ENCODE measurements at regions of chr5 and their contacts with region 1.

Region 1: DNA sequence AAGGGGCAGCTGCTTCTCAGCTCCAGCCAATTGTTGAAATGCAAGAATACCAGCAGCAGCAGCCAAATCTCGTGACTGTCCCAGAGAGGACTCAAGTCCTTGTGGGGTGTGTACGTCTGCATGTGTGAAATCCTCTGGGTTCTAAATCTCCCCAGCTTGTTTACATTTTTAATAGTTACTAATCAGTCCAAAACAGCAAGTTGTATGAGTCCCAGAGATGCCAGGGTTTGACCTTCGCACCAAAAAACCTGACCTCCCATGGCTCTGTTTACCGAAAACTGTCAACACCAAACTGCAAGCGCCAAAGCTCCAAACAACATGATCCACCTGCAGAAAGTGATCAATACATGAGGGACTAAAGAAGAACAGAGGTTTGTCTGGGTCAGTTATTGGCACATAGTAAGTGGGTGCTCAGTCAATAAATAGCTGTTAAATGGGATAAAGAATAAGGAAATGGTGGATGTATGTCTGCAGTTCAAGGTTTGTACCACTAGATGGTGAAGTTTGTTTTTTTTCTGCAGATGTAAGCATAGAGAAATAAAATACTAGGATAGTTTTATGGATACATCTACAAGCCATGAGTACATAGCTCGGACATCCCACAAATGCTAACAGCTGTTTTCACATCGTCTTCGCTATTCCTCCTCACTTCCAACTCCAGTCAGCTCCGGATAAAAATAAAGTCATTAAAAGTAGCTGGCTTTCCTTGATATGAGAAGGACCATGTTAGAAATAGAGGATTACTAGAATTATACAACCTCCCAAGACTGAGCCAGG is 85.3 kb upstream of the ADRB2 start:
- DNase-seq: peak; percentile 36 to 55
- ATAC-seq: peak; percentile 62 to 80; a peak in 5 of 6 replicates
- H3K4me3 ChIP-seq: no peak overlapping the region
- H3K27ac ChIP-seq: no peak overlapping the region
- H3K4me1 ChIP-seq: no peaks in the 10 kb centered on the region
- CTCF ChIP-seq: peak; percentile 73
- EP300 ChIP-seq: no peak
- POLR2A ChIP-seq: no peak
- RAD21 ChIP-seq: peak; percentile 70 to 76

Region 2: DNA sequence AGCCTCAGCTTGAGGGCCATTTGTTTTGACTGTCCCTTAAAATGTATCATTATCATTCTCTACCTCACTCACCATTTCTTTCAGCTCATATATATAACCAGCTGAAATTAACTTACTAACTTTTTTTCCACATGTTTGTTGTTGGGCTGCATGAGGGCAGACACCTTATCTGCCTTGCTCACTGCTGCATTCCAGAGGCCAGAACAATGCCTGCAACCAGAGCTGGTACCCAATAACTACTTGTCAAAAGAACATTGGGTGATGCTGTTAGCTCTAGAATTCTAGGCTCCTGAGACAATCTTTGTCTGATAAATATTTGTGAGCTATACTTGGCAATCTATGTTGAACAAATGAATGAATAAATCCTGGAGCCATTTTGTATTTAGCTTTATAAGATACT is 155.2 kb before region 1 on chr5:
- CTCF ChIA-PET with region 1: no interaction called
- POLR2A ChIA-PET with region 1: no interaction called
- DNase-seq: no peak
- ATAC-seq: no peak
- H3K4me3 ChIP-seq: no peak overlapping the region
- H3K27ac ChIP-seq: no peak overlapping the region
- H3K4me1 ChIP-seq: no peaks in the 10 kb centered on the region
- CTCF ChIP-seq: no peak
- EP300 ChIP-seq: no peak
- POLR2A ChIP-seq: no peak
- RAD21 ChIP-seq: no peak

Region 3: GRCh38 chr5:148791334-148791667 is 50.1 kb after region 1 on chr5:
- CTCF ChIA-PET with region 1: interaction called, 12 read pairs
- POLR2A ChIA-PET with region 1: no interaction called
- DNase-seq: no peak
- ATAC-seq: no peak
- H3K4me3 ChIP-seq: no peak overlapping the region
- H3K27ac ChIP-seq: no peak overlapping the region
- H3K4me1 ChIP-seq: no peaks in the 10 kb centered on the region
- CTCF ChIP-seq: no peak
- EP300 ChIP-seq: no peak
- POLR2A ChIP-seq: no peak
- RAD21 ChIP-seq: no peak

Region 4: DNA sequence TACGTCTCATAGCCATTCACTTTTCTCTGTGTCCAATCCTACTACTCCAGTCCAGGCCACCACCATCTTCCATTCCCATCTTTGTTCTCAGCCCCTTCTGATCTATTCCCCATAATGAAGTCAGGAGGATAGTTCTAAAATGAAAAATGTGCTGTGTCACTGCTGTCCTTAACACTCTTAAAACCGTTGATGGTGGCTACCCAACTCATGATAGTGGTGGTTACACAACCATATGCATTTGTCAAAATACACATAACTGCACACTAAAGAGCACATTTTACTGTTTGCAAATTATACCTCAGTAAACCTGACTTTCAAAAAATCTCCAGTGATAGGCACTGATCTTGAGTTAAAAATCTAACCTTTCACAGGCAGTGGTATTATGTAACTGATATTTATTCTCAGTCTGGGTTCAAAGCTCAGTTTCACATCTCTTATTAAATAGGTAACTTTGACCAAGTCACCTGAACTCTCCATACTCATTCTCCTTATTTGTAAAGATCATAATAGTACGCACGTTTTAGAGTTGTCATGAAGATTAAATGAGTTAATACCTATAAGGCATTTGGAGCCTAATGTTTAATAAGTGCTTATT is 60.6 kb after region 1 on chr5:
- CTCF ChIA-PET with region 1: no interaction called
- POLR2A ChIA-PET with region 1: no interaction called
- DNase-seq: no peak
- ATAC-seq: no peak
- H3K4me3 ChIP-seq: no peak overlapping the region
- H3K27ac ChIP-seq: no peak overlapping the region
- H3K4me1 ChIP-seq: no peaks in the 10 kb centered on the region
- CTCF ChIP-seq: no peak
- EP300 ChIP-seq: no peak
- POLR2A ChIP-seq: no peak
- RAD21 ChIP-seq: no peak

Region 5: GRCh38 chr5:148912714-148913398 is 171.7 kb after region 1 on chr5:
- CTCF ChIA-PET with region 1: interaction called, 20 read pairs
- POLR2A ChIA-PET with region 1: no interaction called
- DNase-seq: peak; percentile 82
- ATAC-seq: peak; percentile 91 to 96
- H3K4me3 ChIP-seq: no peak overlapping the region
- H3K27ac ChIP-seq: peak overlapping the region; percentile 43 to 59; a peak in 5 of 6 replicates
- H3K4me1 ChIP-seq: peaks cover 37% of the 10 kb centered on the region
- CTCF ChIP-seq: peak; percentile 52
- EP300 ChIP-seq: peak in 1 of 2 experiments; percentile 29; a peak in 1 of 5 replicates
- POLR2A ChIP-seq: no peak
- RAD21 ChIP-seq: peak; percentile 65 to 66

Region 6: DNA sequence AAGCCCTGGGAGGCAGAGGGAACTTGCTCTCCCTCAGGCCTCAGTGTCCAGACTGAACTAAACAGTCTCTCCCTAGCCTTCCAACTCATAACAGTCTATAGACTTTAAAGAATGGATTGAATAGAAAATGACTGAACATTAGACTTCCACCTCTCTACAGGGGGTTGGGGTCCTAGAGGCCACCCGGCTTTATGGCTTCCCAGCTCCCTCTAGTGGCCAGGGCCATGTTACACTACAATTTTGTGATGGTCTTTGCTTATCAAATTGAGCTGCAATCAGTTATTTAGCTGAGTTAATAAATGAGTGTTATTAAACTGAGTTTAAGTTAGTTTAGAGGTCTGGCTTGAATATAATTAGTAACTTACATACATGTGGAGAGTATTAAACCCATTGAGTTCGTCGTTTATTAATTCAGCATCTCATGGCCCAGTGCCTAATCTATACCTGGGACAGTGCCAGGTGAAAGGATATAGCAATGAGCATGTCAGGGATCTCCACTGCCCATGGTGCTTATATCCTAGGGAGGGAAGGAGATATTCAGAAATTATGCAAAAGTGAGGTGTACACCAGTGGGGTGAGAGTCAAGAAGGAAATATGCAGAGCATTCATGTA is 216.5 kb after region 1 on chr5:
- CTCF ChIA-PET with region 1: interaction called, 23 read pairs
- POLR2A ChIA-PET with region 1: no interaction called
- DNase-seq: peak in 1 of 2 experiments; percentile 30
- ATAC-seq: peak in 1 of 2 experiments; percentile 86; a peak in 3 of 6 replicates
- H3K4me3 ChIP-seq: no peak overlapping the region
- H3K27ac ChIP-seq: no peak overlapping the region
- H3K4me1 ChIP-seq: no peaks in the 10 kb centered on the region
- CTCF ChIP-seq: peak; percentile 71
- EP300 ChIP-seq: no peak
- POLR2A ChIP-seq: no peak
- RAD21 ChIP-seq: peak; percentile 61 to 73

Region 7: GRCh38 chr5:149114403-149115312 is 373.5 kb after region 1 on chr5:
- CTCF ChIA-PET with region 1: interaction called, 179 read pairs
- POLR2A ChIA-PET with region 1: no interaction called
- DNase-seq: peak; percentile 33 to 75
- ATAC-seq: peak; percentile 99 to 100
- H3K4me3 ChIP-seq: no peak overlapping the region
- H3K27ac ChIP-seq: 0 out of 6 replicates have a peak overlapping the region, but pooled peaks have one; percentile 11 to 35
- H3K4me1 ChIP-seq: peaks cover 9% of the 10 kb centered on the region; the same call in 2 of the 3 replicates
- CTCF ChIP-seq: peak; percentile 78
- EP300 ChIP-seq: no peak
- POLR2A ChIP-seq: no peak
- RAD21 ChIP-seq: peak; percentile 86 to 90

Region 8: DNA sequence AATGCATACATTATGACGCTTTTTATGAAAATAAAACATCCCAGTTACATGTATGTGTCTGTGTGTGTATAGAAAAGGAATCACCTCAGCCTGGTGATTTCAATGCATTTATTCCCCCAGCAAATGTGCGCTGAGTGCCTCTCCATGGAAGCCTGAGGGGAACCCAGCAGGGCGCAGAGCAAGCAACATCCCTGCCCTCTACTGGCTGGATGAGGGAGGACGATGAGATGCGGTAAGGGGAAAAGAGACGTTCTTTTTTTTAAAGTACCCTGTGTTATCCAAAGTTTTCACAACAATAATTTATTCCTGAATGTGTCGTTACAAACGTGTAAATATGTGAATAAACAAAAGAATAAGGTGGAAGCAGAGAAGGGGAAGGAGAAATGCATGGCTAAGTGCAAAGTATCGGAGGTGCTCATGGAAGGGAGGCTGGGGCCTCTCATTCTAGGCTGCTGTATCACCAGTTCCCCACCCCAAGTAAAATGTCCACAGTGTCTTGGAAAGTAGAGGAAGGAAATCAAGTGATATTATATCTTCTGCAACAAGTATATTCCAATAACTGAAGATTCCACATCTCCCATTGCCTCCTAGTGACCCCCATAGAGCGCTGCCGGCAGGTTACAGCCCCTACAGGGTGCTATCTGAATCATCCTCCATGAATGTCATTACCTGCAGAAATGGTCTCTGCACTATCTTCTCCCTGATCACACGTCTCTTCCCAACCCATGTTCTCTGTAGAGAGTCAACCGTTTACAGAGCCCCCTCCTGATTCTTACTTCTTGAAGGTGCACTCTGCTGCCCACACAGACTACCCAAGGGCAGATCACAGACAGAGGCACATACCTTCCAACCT is 387.1 kb after region 1 on chr5:
- CTCF ChIA-PET with region 1: interaction called, 13 read pairs
- POLR2A ChIA-PET with region 1: no interaction called
- DNase-seq: peak; percentile 30 to 76
- ATAC-seq: peak; percentile 88 to 97
- H3K4me3 ChIP-seq: no peak overlapping the region
- H3K27ac ChIP-seq: no peak overlapping the region
- H3K4me1 ChIP-seq: no peaks in the 10 kb centered on the region
- CTCF ChIP-seq: peak; percentile 60
- EP300 ChIP-seq: no peak
- POLR2A ChIP-seq: no peak
- RAD21 ChIP-seq: peak; percentile 31 to 57; a peak in 4 of 5 replicates

Measured in A549 (cell line).